Sigmoid colon (tissue), 7 donors: ENCODE measurements at regions of chr10 and their contacts with region 1.

Region 1: GRCh38 chr10:97072851-97073665 is 112.7 kb downstream of the SLIT1 start:
- DNase-seq: peak; percentile 85
- H3K4me3 ChIP-seq: no peak overlapping the region
- H3K27ac ChIP-seq: no peak overlapping the region
- H3K4me1 ChIP-seq: no peaks in the 10 kb centered on the region
- H3K27me3 ChIP-seq: peaks cover 0 to 21% (median 0%) of the 10 kb centered on the region in 3 donors
- CTCF ChIP-seq: peak; percentile 46 to 93 (median 72)
- EP300 ChIP-seq: no peak
- POLR2A ChIP-seq: no peak

Region 2: GRCh38 chr10:96858038-96858705 is 214.9 kb before region 1 on chr10:
- intact Hi-C with region 1: no loop called
- DNase-seq: no peak
- H3K4me3 ChIP-seq: no peak overlapping the region
- H3K27ac ChIP-seq: no peak overlapping the region
- H3K4me1 ChIP-seq: peaks cover 0 to 34% (median 27%) of the 10 kb centered on the region in 4 donors
- H3K27me3 ChIP-seq: no peaks in the 10 kb centered on the region
- CTCF ChIP-seq: no peak
- EP300 ChIP-seq: no peak
- POLR2A ChIP-seq: no peak

Region 3: GRCh38 chr10:97210543-97210961 is 137.5 kb after region 1 on chr10:
- intact Hi-C with region 1: loop called (anchors 2 kb)
- DNase-seq: peak; percentile 78
- H3K4me3 ChIP-seq: no peak overlapping the region
- H3K27ac ChIP-seq: no peak overlapping the region
- H3K4me1 ChIP-seq: peaks cover 0 to 3% (median 0%) of the 10 kb centered on the region in 4 donors
- H3K27me3 ChIP-seq: no peaks in the 10 kb centered on the region
- CTCF ChIP-seq: peak; percentile 75 to 99 (median 89)
- EP300 ChIP-seq: no peak
- POLR2A ChIP-seq: no peak